Vagina (tissue), 2 donors: ENCODE measurements at regions of chr3 and their contacts with region 1.

Region 1: DNA sequence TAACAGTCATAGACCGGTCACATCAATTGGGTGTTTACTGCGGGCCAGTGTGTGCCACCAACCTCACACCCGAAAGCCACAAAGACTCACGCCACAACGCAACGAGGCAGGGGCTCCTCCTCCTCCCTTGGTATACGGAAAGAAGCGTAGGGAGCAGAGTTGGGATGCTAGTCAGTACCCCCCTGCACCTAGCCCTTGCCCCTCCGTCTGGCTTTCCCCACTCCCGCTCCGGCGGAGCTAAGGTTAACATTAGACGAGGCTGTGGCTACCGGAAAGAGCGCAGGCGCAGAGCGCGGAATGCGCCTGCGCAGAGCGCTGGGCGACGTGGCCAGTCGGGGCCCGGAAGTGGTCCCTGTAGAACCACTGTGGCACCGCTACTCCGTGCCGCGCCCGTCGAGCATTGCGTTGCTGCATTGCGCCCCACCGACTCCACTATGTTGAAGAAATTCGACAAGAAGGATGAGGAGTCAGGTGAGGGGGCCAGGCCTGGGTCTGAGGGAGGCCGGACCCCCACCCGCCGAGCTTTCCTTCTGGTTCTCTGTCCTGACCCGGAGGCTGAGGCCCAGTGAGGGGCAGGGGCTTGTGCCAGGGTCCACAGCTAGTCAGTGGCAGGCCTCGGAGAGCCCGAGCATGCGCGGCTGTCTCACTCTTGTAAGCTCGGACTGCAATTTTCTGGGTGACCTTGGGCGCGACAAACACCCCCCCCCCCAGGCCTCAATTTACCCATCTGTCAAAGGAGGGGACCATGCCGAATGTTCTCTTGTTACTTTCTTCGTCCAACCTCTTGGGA is at the start of gene COPG1:
- DNase-seq: no peak
- H3K4me3 ChIP-seq: peak within 1 kb of the TSS; percentile 69 to 97
- H3K27ac ChIP-seq: peak within 1 kb of the TSS; percentile 89
- H3K4me1 ChIP-seq: peaks cover 72% of the 10 kb centered on the region
- H3K27me3 ChIP-seq: no peaks in the 10 kb centered on the region
- CTCF ChIP-seq: no peak
- POLR2A ChIP-seq: peak; percentile 30 to 89
- total RNA-seq, gene COPG1: 76.4 TPM

Region 2: GRCh38 chr3:128969993-128970739 is 279.3 kb before region 1 on chr3:
- intact Hi-C with region 1: loop called (anchors 10 kb)
- DNase-seq: no peak
- H3K4me3 ChIP-seq: no peak overlapping the region
- H3K27ac ChIP-seq: no peak overlapping the region
- H3K4me1 ChIP-seq: no peaks in the 10 kb centered on the region
- H3K27me3 ChIP-seq: no peaks in the 10 kb centered on the region
- CTCF ChIP-seq: peak; percentile 72 to 80 (median 73)
- POLR2A ChIP-seq: no peak

Region 3: DNA sequence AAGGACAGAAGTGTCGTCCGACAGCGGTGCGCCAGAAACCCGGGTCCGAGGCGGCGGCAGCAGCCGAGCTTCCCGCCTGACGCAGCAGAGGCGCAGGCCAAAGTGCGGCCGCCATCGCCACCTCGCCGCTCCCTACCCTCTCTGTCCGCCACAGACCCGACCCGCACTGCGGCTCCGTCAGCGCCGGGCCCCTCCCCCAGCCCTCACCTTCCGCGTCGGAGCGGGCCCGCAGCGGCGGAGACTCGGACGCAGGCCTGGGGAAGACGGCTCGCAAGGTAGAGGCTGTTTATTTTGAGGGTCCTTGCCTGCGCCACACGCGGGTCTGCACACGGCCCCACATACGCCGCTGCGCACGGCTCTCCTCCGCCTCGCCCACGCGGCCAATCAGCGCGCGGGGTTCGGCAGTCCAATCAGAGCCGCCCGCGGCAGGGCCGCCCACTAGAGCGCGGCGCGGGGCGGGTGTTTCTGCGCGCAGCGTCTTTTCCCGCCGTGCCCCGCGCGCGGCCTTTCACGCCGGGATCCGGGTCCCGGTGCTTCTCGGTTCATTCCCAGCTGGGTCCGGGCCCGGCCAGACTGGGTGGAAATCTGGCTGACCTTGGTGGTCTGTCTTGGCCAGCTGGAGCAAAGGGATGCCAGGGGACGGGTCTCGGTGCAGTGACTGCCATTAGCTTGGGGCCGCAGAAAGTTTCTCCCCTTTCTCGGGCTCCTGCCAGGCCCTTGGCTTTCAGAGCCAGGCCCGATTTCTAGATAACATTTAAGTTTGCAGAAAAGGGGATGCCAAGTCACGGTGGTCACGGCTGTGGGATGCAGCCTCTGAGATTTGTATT is 65.7 kb before region 1 on chr3 and contains the start of gene CNBP:
- intact Hi-C with region 1: loop called (anchors 5 kb)
- DNase-seq: peak in 1 of 2 donors; percentile 94
- H3K4me3 ChIP-seq: peak within 1 kb of the TSS; percentile 95 to 98
- H3K27ac ChIP-seq: peak within 1 kb of the TSS; percentile 98
- H3K4me1 ChIP-seq: peaks cover 49% of the 10 kb centered on the region
- H3K27me3 ChIP-seq: no peaks in the 10 kb centered on the region
- CTCF ChIP-seq: peak in 1 of 3 experiments; percentile 1
- POLR2A ChIP-seq: peak; percentile 10 to 98
- total RNA-seq, gene CNBP: 405 TPM

Region 4: DNA sequence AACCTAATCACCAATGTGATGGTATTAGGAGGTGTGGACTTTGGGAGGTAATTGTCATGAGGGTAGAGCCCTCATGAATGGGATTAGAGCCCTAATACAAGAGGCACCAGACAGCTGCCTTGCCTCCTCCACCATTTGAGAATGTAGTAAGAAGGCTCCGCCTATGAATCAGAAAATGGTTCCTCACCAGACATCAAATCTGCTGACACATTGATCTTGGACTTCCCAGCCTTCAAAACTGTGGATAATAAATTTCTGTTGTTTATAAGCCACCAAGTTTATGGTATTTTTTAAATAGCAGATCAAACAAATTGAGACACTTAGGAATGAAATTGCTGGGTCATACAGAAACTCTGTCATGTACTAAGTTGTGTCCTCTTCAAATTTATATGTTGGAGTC is 1039.2 kb after region 1 on chr3:
- intact Hi-C with region 1: no loop called
- DNase-seq: no peak
- H3K4me3 ChIP-seq: no peak overlapping the region
- H3K27ac ChIP-seq: no peak overlapping the region
- H3K4me1 ChIP-seq: no peaks in the 10 kb centered on the region
- H3K27me3 ChIP-seq: no peaks in the 10 kb centered on the region
- CTCF ChIP-seq: no peak
- POLR2A ChIP-seq: no peak